A549 (cell line): ENCODE measurements at regions of chr5 and their contacts with region 1.

Region 1: GRCh38 chr5:16552666-16553343 is 64.0 kb downstream of the RETREG1 start:
- DNase-seq: peak; percentile 53 to 55
- ATAC-seq: peak; percentile 96 to 97
- H3K4me3 ChIP-seq: no peak overlapping the region
- H3K27ac ChIP-seq: no peak overlapping the region
- H3K4me1 ChIP-seq: no peaks in the 10 kb centered on the region
- CTCF ChIP-seq: peak; percentile 61
- EP300 ChIP-seq: no peak
- POLR2A ChIP-seq: no peak
- RAD21 ChIP-seq: peak; percentile 40 to 48; a peak in 3 of 5 replicates

Region 2: DNA sequence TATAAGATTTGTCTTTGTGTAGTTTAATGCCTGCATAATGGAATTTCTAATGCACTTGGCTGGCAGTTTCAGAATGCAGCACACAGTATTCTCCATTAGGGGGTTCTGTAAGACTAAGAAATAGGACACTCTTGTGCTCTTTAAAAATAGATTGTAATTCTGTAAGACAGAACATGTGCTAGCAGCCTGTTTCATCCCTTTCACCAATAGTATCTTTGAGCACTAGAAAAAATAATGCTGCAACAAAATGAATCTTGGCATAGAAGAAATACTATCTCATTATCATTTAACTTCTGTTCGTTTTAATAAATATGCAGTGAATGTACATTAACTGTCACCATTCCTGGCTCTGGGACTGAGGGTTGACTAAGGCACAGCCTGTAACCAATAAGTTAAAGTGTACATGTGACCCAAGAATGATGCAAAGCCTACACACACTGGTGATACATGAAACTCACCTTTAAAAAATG is 63.4 kb before region 1 on chr5:
- CTCF ChIA-PET with region 1: interaction called, 26 read pairs
- POLR2A ChIA-PET with region 1: no interaction called
- DNase-seq: peak; percentile 45 to 47
- ATAC-seq: peak; percentile 87 to 93
- H3K4me3 ChIP-seq: no peak overlapping the region
- H3K27ac ChIP-seq: no peak overlapping the region
- H3K4me1 ChIP-seq: 0 out of 3 replicates have a peak, but pooled peaks cover 6% of the 10 kb centered on the region
- CTCF ChIP-seq: peak; percentile 79
- EP300 ChIP-seq: no peak
- POLR2A ChIP-seq: no peak
- RAD21 ChIP-seq: peak; percentile 82 to 87

Region 3: GRCh38 chr5:16497546-16497945 is 55.3 kb before region 1 on chr5:
- CTCF ChIA-PET with region 1: interaction called, 21 read pairs
- POLR2A ChIA-PET with region 1: no interaction called
- DNase-seq: no peak
- ATAC-seq: no peak
- H3K4me3 ChIP-seq: no peak overlapping the region
- H3K27ac ChIP-seq: no peak overlapping the region
- H3K4me1 ChIP-seq: 0 out of 3 replicates have a peak, but pooled peaks cover 5% of the 10 kb centered on the region
- CTCF ChIP-seq: no peak
- EP300 ChIP-seq: no peak
- POLR2A ChIP-seq: no peak
- RAD21 ChIP-seq: no peak

Region 4: GRCh38 chr5:16536246-16536645 is 16.6 kb before region 1 on chr5:
- CTCF ChIA-PET with region 1: interaction called, 21 read pairs
- POLR2A ChIA-PET with region 1: no interaction called
- DNase-seq: peak in 1 of 2 experiments; percentile 16
- ATAC-seq: peak in 1 of 2 experiments; percentile 31; a peak in 2 of 6 replicates
- H3K4me3 ChIP-seq: no peak overlapping the region
- H3K27ac ChIP-seq: no peak overlapping the region; a peak in 1 of 6 replicates
- H3K4me1 ChIP-seq: peaks cover 16% of the 10 kb centered on the region
- CTCF ChIP-seq: no peak
- EP300 ChIP-seq: no peak
- POLR2A ChIP-seq: no peak
- RAD21 ChIP-seq: no peak

Region 5: GRCh38 chr5:16564248-16564867 is 11.6 kb after region 1 on chr5:
- CTCF ChIA-PET with region 1: interaction called, 29 read pairs
- POLR2A ChIA-PET with region 1: no interaction called
- DNase-seq: no peak
- ATAC-seq: no peak
- H3K4me3 ChIP-seq: no peak overlapping the region
- H3K27ac ChIP-seq: no peak overlapping the region
- H3K4me1 ChIP-seq: no peaks in the 10 kb centered on the region
- CTCF ChIP-seq: no peak
- EP300 ChIP-seq: no peak
- POLR2A ChIP-seq: no peak
- RAD21 ChIP-seq: no peak